Heart right ventricle (tissue), 16 donors: ENCODE measurements at regions of chr17 and their contacts with region 1.

Region 1: GRCh38 chr17:75679706-75680442 is 12.7 kb downstream of the SAP30BP start:
- DNase-seq: peak in 1 of 2 donors; percentile 46
- ATAC-seq: peak; percentile 67 to 83 (median 80)
- H3K4me3 ChIP-seq: no peak overlapping the region
- H3K27ac ChIP-seq: peak overlapping the region; percentile 37 to 83 (median 62)
- H3K4me1 ChIP-seq: peaks cover 11 to 63% (median 37%) of the 10 kb centered on the region in 9 donors
- H3K27me3 ChIP-seq: no peaks in the 10 kb centered on the region
- CTCF ChIP-seq: peak in 7 of 9 donors; percentile 34 to 60 (median 48)

Region 2: DNA sequence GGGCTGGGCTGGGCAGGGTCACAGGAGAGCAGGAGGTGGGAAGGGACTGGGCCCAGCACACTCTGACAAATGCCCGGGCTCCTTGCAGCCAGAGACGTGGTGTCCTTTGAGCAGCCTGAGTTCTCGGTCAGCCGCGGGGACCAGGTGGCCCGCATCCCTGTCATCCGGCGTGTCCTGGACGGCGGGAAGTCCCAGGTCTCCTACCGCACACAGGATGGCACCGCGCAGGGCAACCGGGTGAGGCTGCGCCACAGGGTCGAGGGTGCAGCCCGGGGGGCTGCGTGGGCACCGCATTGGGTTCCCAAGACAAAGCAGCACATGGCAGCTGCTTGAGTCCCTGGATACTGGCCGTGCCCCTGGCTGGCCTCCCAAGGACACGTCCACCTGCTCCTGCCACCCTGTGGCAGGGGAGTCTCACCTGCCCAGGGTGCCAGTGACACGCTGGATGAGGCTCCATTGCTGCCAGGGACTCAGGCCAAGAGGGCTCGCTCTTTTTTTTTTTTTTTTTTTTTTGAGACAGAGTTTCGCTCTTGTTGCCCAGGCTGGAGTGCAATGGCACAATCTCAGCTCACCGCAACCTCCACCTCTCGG is 63.8 kb after region 1 on chr17:
- intact Hi-C with region 1: loop called in 6 of 10 experiments (anchors 1 to 2 kb)
- DNase-seq: no peak
- ATAC-seq: no peak
- H3K4me3 ChIP-seq: no peak overlapping the region
- H3K27ac ChIP-seq: no peak overlapping the region
- H3K4me1 ChIP-seq: peaks cover 0 to 11% (median 5%) of the 10 kb centered on the region in 9 donors
- H3K27me3 ChIP-seq: no peaks in the 10 kb centered on the region
- CTCF ChIP-seq: no peak

Region 3: GRCh38 chr17:75749545-75750389 is 69.9 kb after region 1 on chr17:
- intact Hi-C with region 1: loop called (anchors 1 to 5 kb)
- DNase-seq: peak; percentile 86 to 88
- ATAC-seq: peak; percentile 68 to 88 (median 78)
- H3K4me3 ChIP-seq: no peak overlapping the region
- H3K27ac ChIP-seq: no peak overlapping the region
- H3K4me1 ChIP-seq: peaks cover 7 to 36% (median 26%) of the 10 kb centered on the region in 9 donors
- H3K27me3 ChIP-seq: no peaks in the 10 kb centered on the region
- CTCF ChIP-seq: peak; percentile 95 to 98 (median 96)